Activated CD8-positive, alpha-beta T cell treated with anti-CD3 and anti-CD28 coated beads, Interleukin-2, amount 10 ng/mL, durations not matched to agents 7 days and 5 days (primary cell): ENCODE measurements at regions of chr11 and their contacts with region 1.

Region 1: GRCh38 chr11:17276236-17277023 is at the start of gene NUCB2:
- DNase-seq: peak; percentile 97
- ATAC-seq: peak; percentile 94
- H3K4me3 Mint-ChIP-seq: peak within 1 kb of the TSS; percentile 90
- H3K27ac Mint-ChIP-seq: peak within 1 kb of the TSS; percentile 95
- H3K4me1 Mint-ChIP-seq: peaks cover 59% of the 10 kb centered on the region
- H3K27me3 Mint-ChIP-seq: no peaks in the 10 kb centered on the region
- total RNA-seq, gene NUCB2: 187 to 210 TPM

Region 2: GRCh38 chr11:17077520-17078401 is 198.7 kb before region 1 on chr11 and contains the start of gene RPS13:
- CTCF ChIA-PET with region 1: no interaction called
- POLR2A ChIA-PET with region 1: interaction called, 12 read pairs
- DNase-seq: peak; percentile 97
- ATAC-seq: peak; percentile 92
- H3K4me3 Mint-ChIP-seq: peak within 1 kb of the TSS; percentile 96
- H3K27ac Mint-ChIP-seq: peak within 1 kb of the TSS; percentile 99
- H3K4me1 Mint-ChIP-seq: peaks cover 36% of the 10 kb centered on the region
- H3K27me3 Mint-ChIP-seq: no peaks in the 10 kb centered on the region
- total RNA-seq, gene RPS13: 986 to 1,008 TPM

Region 3: DNA sequence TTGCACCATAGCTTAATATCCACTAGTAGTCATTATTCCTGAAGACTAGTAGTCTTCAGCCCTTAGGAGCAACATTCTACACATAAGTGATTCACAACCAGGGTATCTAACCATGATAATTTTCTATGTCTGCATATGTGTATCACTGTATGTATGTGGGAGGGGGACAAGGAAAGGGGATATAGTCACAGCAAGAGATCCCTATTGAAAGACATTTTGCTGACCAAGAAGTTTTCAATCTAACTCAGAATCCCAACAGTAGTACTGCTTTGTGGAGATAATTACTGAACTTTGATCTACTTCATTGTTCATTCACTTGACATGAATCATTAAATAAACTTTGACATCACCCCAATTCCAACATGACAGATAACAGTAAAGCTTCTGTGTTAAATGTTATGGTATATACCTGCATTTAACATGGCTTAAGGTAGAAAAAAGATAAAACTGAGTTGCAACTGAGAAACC is 79.0 kb before region 1 on chr11:
- CTCF ChIA-PET with region 1: no interaction called
- POLR2A ChIA-PET with region 1: no interaction called
- DNase-seq: no peak
- ATAC-seq: no peak
- H3K4me3 Mint-ChIP-seq: no peak overlapping the region
- H3K27ac Mint-ChIP-seq: no peak overlapping the region
- H3K4me1 Mint-ChIP-seq: no peaks in the 10 kb centered on the region
- H3K27me3 Mint-ChIP-seq: no peaks in the 10 kb centered on the region

Region 4: DNA sequence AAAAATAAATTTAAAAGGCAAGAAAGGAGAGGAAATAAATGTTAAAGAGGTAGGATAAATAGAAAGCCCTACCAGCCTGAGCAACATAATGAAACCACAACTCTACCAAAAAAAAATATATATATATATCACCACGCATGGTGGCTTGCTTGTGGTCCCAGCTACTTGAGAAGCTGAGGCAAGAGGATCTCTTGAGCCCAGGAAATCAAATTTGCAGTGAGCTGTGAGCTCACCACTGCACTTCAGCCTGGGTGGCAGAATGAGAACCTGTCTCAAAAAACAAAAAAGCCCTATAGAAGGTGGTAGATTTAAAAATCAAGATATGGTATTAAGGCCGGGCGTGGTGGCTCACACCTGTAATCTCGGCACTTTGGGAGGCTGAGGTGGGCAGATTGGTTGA is 10.6 kb after region 1 on chr11:
- CTCF ChIA-PET with region 1: interaction called, 6 read pairs
- POLR2A ChIA-PET with region 1: interaction called, 26 read pairs
- DNase-seq: peak; percentile 47
- ATAC-seq: peak; percentile 55
- H3K4me3 Mint-ChIP-seq: no peak overlapping the region
- H3K27ac Mint-ChIP-seq: peak overlapping the region; percentile 37
- H3K4me1 Mint-ChIP-seq: peaks cover 50% of the 10 kb centered on the region
- H3K27me3 Mint-ChIP-seq: no peaks in the 10 kb centered on the region

Region 5: DNA sequence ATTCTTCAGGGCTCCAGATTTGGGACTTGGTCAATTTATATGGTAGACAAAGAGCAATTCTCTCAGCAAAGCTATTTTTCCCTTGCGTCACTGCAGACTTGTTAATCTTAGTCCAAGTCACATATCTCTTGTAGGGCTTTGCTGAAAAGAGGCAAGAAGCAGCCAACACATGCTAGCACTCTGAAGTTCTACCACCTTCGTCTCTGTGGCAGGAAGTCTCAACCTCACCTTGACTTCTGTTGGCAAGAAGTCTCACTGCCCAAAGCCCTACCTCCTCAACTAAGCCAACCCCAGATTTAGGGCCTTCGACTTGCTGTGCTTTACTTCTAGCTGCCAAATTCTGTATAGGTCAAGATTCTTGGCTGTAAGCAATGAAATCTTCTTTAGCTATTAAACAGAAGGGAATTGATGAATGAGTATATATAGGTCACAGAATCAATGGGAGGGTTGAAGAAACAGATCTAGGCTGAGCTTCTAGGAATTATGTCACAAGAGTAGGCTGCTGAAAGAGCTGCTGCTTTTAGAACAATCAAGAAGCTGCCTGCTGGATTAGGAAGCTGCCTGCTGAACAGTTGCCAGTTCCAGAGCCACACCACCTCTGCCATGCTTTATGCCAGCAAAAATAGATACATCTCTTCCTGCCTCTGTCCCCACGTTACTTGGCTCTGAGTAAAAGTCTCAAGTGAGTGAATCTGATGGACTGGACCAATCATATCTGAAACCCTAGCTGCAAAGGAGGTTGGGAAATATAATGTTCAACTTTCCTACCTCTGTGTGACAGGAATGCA is 57.6 kb after region 1 on chr11:
- CTCF ChIA-PET with region 1: no interaction called
- POLR2A ChIA-PET with region 1: interaction called, 10 read pairs
- DNase-seq: peak; percentile 52
- ATAC-seq: peak; percentile 88
- H3K4me3 Mint-ChIP-seq: no peak overlapping the region
- H3K27ac Mint-ChIP-seq: peak overlapping the region; percentile 66
- H3K4me1 Mint-ChIP-seq: peaks cover 21% of the 10 kb centered on the region
- H3K27me3 Mint-ChIP-seq: no peaks in the 10 kb centered on the region

Region 6: DNA sequence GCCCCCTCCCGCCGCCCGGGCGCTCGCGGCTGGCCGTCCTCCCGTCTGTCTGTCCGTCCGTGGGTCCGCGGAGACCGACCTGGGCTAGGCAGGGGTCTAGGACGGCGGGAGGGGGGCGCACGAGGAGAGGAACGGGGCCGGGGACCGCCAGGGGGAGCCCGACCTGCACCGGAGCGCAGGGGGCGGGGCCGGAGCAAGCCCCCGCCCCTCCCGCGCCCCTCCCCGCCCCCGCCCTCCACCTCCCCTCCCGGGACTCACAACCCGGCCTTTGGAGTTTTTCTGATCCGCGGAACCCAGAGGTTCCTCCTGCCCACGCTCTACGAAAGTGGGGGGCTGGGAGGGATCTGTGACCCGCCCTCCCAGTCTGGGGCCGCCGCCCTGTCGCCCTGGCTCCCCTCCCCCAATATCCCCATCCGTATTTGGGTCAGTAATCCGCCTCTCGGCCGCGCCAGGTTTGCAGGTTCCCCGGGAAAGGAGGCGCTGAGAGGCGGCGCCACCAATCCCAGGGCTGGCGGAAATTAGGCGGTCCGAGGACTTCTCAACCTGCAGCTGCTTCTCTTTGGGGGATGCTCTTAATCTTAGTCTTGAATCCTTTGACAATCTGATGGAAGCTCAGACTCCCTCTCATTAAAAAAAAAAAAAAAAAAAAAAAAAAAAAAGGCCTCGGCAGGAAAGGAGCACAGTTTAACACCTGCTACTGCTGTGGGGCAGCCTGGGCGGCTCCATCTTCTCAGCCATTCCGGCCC is 113.0 kb after region 1 on chr11:
- CTCF ChIA-PET with region 1: no interaction called
- POLR2A ChIA-PET with region 1: no interaction called
- DNase-seq: peak; percentile 83
- ATAC-seq: peak; percentile 85
- H3K4me3 Mint-ChIP-seq: peak overlapping the region; percentile 63
- H3K27ac Mint-ChIP-seq: no peak overlapping the region
- H3K4me1 Mint-ChIP-seq: peaks cover 17% of the 10 kb centered on the region
- H3K27me3 Mint-ChIP-seq: peaks cover 11% of the 10 kb centered on the region